Testis (tissue), 5 donors: ENCODE measurements at regions of chr2 and their contacts with region 1.

Region 1: DNA sequence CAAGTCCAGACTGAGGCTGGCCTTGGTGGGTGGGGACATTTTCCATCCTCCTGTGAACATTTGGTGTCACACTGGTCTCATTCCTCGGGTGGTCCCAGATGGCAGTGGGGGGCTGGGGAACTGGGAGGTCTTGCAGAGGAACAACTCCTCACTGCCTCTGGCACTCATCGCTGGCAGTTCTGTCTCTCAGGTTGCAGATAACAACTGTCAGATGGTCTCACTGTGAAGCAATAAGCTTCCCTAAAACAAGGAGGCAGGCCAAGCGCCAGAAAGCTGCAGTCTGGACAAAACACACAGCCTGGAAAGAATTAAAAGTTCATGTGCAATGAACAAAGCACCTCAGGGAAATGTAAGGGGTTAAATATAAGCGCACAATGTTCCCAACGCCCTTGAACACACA is 78.1 kb downstream of the IRS1 start:
- DNase-seq: peak; percentile 68
- H3K4me3 ChIP-seq: no peak overlapping the region
- H3K27ac ChIP-seq: no peak overlapping the region
- H3K4me1 ChIP-seq: peaks cover 6% of the 10 kb centered on the region
- H3K27me3 ChIP-seq: no peaks in the 10 kb centered on the region
- CTCF ChIP-seq: no peak
- POLR2A ChIP-seq: no peak

Region 2: GRCh38 chr2:226575928-226576327 is 145.6 kb before region 1 on chr2:
- intact Hi-C with region 1: no loop called
- DNase-seq: no peak
- H3K4me3 ChIP-seq: no peak overlapping the region
- H3K27ac ChIP-seq: no peak overlapping the region
- H3K4me1 ChIP-seq: no peaks in the 10 kb centered on the region
- H3K27me3 ChIP-seq: no peaks in the 10 kb centered on the region
- CTCF ChIP-seq: no peak
- POLR2A ChIP-seq: no peak

Region 3: GRCh38 chr2:226791487-226792081 is 70.0 kb after region 1 on chr2:
- intact Hi-C with region 1: loop called (anchors 10 kb)
- DNase-seq: peak; percentile 93
- H3K4me3 ChIP-seq: peak overlapping the region; percentile 67 to 79
- H3K27ac ChIP-seq: peak overlapping the region; percentile 87 to 93
- H3K4me1 ChIP-seq: no peaks in the 10 kb centered on the region
- H3K27me3 ChIP-seq: no peaks in the 10 kb centered on the region
- CTCF ChIP-seq: peak; percentile 42 to 77 (median 56)
- POLR2A ChIP-seq: no peak